Heart right ventricle (tissue), 16 donors: ENCODE measurements at regions of chr20 and their contacts with region 1.

Region 1: GRCh38 chr20:45368221-45368980 is 5.4 kb downstream of the SYS1 start:
- DNase-seq: no peak
- ATAC-seq: no peak
- H3K4me3 ChIP-seq: no peak overlapping the region
- H3K27ac ChIP-seq: peak overlapping the region in 2 of 10 donors; percentile 14 to 65
- H3K4me1 ChIP-seq: peaks cover 2 to 56% (median 20%) of the 10 kb centered on the region in 9 donors
- H3K27me3 ChIP-seq: no peaks in the 10 kb centered on the region
- CTCF ChIP-seq: no peak

Region 2: DNA sequence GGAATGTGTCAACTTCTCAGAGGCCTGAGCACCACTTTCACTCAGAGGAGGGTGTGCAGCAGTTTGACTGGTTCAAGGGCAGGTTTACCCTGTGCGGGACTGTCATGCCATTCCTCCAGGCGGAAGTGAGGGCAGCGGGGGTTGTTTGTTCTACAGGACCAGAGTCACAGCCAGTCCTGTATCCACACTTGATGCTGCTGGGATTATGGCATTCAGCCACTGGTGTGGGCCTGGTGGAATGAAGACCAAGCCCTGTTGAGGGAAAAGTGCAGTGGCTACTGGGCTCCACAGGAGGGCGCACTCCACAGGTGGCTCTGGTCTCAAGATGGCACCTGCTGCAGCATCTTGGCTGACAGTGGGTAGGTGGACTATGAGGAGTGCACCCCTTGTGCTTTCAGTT is 132.4 kb before region 1 on chr20:
- intact Hi-C with region 1: no loop called
- DNase-seq: no peak
- ATAC-seq: no peak
- H3K4me3 ChIP-seq: no peak overlapping the region
- H3K27ac ChIP-seq: no peak overlapping the region
- H3K4me1 ChIP-seq: no peaks in the 10 kb centered on the region
- H3K27me3 ChIP-seq: peaks cover 0 to 40% (median 22%) of the 10 kb centered on the region in 7 donors
- CTCF ChIP-seq: peak in 1 of 9 donors; percentile 28

Region 3: DNA sequence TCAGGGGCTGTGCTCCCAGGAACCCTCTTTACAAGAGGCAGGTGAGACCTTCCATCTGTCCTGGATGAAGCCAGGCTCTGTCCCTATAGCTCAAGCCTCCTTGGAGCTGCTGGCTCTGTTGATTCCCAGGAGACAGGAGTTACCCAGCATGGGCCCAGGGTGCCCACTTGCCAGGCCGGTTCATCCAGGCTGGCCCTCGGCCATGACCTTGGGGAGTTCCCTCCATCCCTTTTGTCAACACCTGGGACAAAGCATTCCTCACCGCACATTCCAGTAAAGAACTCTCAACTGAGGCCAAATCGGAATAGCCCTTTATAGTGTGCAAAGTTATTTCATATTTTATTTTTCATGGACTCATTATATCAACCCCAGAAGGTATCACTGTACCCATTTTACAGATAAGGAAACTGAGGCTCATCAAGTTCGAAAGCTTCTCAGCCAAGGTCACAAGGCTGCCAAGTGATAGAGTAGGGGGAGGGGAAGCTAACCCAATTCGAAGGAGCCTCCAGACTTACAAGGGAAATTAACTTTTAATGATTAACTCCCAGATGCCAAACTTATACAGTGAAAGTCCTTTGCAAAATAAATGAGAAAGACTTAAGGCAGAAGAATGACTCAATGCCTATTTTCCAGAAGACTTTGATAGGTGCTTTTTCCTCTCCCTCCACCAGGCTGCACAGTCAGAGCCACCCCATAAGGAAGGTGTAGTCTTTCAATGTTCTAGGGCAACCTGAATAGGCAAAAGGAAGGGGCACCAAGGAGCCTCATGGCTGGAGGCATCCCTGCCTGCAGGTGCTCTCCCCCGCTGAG is 38.7 kb before region 1 on chr20:
- intact Hi-C with region 1: loop called in 6 of 10 experiments (anchors 5 kb)
- DNase-seq: no peak
- ATAC-seq: no peak
- H3K4me3 ChIP-seq: no peak overlapping the region
- H3K27ac ChIP-seq: no peak overlapping the region
- H3K4me1 ChIP-seq: peaks cover 0 to 8% (median 0%) of the 10 kb centered on the region in 9 donors
- H3K27me3 ChIP-seq: no peaks in the 10 kb centered on the region
- CTCF ChIP-seq: no peak

Region 4: DNA sequence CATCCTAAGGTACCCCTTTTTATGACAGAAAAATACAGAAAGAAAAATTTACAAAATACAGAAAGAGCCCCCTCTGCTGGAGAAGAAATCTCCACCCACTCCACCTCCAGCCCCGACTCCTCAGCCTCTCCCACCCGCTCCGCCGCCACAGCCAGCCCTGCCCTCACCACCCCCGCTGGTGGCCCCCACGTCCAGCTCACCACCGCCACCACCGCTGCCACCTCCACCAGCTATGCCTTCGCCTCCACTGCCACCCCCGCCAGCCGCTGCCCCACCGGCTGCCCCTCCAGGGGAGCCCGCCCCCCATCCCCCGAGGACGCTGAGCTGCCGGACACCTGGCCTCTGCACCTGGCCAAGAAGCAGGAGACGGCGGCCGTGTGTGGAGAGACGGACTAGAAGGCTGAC is 118.8 kb after region 1 on chr20:
- intact Hi-C with region 1: no loop called
- DNase-seq: no peak
- ATAC-seq: no peak
- H3K4me3 ChIP-seq: no peak overlapping the region
- H3K27ac ChIP-seq: no peak overlapping the region
- H3K4me1 ChIP-seq: no peaks in the 10 kb centered on the region
- H3K27me3 ChIP-seq: peaks cover 0 to 54% (median 44%) of the 10 kb centered on the region in 7 donors
- CTCF ChIP-seq: peak in 3 of 9 donors; percentile 11 to 33 (median 14)